CD4-positive, alpha-beta T cell (primary cell): ENCODE measurements at regions of chr1 and their contacts with region 1.

Region 1: DNA sequence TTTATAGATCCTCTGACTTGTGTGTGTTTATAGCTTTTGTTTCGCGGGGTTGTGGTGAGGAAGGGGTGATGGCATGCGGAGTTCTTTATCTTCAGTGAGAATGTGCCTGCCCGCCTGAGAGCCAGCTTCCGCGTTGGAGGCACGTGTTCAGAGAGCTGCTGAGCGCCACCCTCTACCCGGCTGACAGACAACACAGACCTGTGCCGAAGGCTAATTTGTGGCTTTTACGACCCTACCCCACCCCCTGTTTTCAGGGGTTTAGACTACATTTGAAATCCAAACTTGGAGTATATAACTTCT is 14.4 kb upstream of the CD101 start:
- DNase-seq: peak; percentile 57 to 87 (median 73)
- ATAC-seq: peak; percentile 93
- H3K4me3 ChIP-seq: peak overlapping the region; percentile 54
- H3K4me3 Mint-ChIP-seq: peak overlapping the region; percentile 78
- H3K27ac ChIP-seq: peak overlapping the region; percentile 42 to 72
- H3K27ac Mint-ChIP-seq: peak overlapping the region; percentile 91
- H3K4me1 ChIP-seq: peaks cover 49% of the 10 kb centered on the region
- H3K4me1 Mint-ChIP-seq: peaks cover 70% of the 10 kb centered on the region
- H3K27me3 ChIP-seq: no peaks in the 10 kb centered on the region
- H3K27me3 Mint-ChIP-seq: no peaks in the 10 kb centered on the region
- CTCF ChIP-seq: no peak

Region 2: DNA sequence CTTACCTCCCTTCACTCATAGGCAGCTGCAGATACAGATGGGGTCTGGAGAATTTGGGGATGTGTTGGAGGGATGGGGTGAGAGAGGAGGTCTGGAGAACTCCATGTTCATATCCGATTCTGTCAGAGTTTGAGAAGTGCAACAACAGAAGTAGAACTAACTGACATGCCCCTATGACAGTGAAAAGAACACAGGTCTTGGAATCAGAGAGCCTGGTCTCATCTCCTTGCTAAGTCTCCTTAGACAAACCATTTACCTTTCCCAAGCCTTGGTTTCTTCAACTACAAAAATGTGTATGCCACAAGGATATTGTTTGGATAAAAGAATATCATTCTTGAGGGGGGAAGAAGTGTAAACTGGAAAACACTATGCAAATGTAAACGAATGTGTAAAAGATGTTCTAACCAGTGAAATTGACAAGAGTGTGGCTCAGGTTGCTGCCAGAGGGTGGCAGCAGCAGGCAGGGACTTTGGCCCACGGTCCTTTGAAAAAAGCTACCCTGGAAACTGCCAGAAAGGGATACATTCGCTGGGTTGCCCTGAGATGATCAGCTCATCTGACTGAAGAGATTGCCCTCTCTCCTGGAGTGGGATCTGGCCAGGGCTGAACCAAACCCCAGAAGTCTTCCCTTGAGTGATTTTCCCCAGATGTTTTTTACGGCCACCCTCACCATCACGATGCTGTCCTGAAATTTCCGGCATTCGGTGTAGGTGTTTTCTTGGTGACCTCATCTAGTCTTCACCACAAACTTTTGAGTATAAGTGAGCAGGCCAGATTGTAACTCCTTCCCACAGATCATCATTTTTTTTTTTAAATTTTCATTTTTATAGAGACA is 250.0 kb before region 1 on chr1:
- CTCF ChIA-PET with region 1: interaction called, 10 read pairs
- POLR2A ChIA-PET with region 1: interaction called, 29 read pairs
- intact Hi-C with region 1: loop called in 1 of 2 experiments (anchors 1 kb)
- DNase-seq: peak; percentile 66 to 90 (median 73)
- ATAC-seq: peak; percentile 67
- H3K4me3 ChIP-seq: peak overlapping the region; percentile 28
- H3K4me3 Mint-ChIP-seq: peak overlapping the region; percentile 76
- H3K27ac ChIP-seq: peak overlapping the region; percentile 93 to 98
- H3K27ac Mint-ChIP-seq: peak overlapping the region; percentile 99
- H3K4me1 ChIP-seq: peaks cover 57% of the 10 kb centered on the region
- H3K4me1 Mint-ChIP-seq: peaks cover 45% of the 10 kb centered on the region
- H3K27me3 ChIP-seq: no peaks in the 10 kb centered on the region
- H3K27me3 Mint-ChIP-seq: no peaks in the 10 kb centered on the region
- CTCF ChIP-seq: peak; percentile 97

Region 3: DNA sequence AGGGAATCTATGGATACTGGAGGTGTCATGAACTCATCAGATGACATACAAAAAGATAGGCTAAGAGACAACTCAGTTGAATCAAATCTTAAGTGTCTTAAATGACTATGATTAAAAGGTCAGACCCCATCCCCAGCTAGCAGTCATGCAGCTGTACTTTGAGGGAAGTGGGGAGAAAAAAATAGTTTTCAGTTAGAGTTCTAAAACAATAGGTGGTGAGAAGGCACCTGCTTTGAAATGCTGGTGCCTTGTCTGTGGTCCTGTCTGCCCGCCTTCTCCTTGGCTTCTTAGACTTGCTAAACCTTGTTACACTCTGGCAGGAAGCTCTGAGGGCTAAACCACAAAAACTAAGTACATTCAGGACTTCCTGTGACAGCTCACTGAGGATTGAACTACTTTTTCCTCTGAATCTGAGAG is 217.6 kb before region 1 on chr1:
- CTCF ChIA-PET with region 1: interaction called, 8 read pairs
- POLR2A ChIA-PET with region 1: interaction called, 16 read pairs
- intact Hi-C with region 1: no loop called
- DNase-seq: peak in 13 of 14 experiments; percentile 60 to 94 (median 68)
- ATAC-seq: peak; percentile 79
- H3K4me3 ChIP-seq: no peak overlapping the region
- H3K4me3 Mint-ChIP-seq: peak overlapping the region; percentile 66
- H3K27ac ChIP-seq: peak overlapping the region; percentile 88 to 89
- H3K27ac Mint-ChIP-seq: peak overlapping the region; percentile 99
- H3K4me1 ChIP-seq: peaks cover 74% of the 10 kb centered on the region
- H3K4me1 Mint-ChIP-seq: peaks cover 97% of the 10 kb centered on the region
- H3K27me3 ChIP-seq: no peaks in the 10 kb centered on the region
- H3K27me3 Mint-ChIP-seq: no peaks in the 10 kb centered on the region
- CTCF ChIP-seq: no peak

Region 4: DNA sequence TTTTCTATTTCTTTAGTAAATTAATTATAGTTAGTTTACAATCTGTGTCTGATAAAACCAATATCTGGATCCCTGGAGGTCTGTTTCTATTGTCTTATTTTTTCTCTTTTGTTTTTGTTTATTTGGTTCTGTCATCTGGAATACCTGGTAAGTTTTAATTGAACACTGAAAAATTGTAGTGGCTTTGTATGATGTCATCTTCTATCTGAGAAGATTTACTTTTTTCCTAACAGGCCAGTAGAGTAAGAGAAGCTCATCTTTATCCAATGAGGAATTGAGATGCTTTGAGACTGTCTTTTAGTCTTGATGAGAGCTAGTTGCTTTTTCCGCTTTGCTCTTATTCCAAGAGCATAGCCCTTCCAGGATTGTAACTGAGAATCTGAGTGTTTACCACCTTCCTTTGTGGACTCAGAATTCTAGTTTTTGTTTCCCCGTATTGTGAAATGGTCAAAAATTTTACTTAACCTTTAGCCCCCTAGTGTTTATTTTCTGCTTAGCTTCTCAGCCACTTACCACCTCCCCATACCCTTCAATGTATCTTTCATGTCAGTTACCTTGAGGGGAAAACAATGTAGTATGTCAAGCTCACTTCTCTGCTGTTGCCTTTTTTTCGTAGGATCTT is 52.5 kb before region 1 on chr1:
- CTCF ChIA-PET with region 1: no interaction called
- POLR2A ChIA-PET with region 1: interaction called, 7 read pairs
- intact Hi-C with region 1: loop called in 1 of 2 experiments (anchors 5 kb)
- DNase-seq: peak in 3 of 14 experiments; percentile 51 to 59 (median 58)
- ATAC-seq: no peak
- H3K4me3 ChIP-seq: no peak overlapping the region
- H3K4me3 Mint-ChIP-seq: no peak overlapping the region
- H3K27ac ChIP-seq: no peak overlapping the region
- H3K27ac Mint-ChIP-seq: peak overlapping the region; percentile 76
- H3K4me1 ChIP-seq: peaks cover 7% of the 10 kb centered on the region
- H3K4me1 Mint-ChIP-seq: peaks cover 25% of the 10 kb centered on the region
- H3K27me3 ChIP-seq: no peaks in the 10 kb centered on the region
- H3K27me3 Mint-ChIP-seq: no peaks in the 10 kb centered on the region
- CTCF ChIP-seq: peak; percentile 33

Region 5: DNA sequence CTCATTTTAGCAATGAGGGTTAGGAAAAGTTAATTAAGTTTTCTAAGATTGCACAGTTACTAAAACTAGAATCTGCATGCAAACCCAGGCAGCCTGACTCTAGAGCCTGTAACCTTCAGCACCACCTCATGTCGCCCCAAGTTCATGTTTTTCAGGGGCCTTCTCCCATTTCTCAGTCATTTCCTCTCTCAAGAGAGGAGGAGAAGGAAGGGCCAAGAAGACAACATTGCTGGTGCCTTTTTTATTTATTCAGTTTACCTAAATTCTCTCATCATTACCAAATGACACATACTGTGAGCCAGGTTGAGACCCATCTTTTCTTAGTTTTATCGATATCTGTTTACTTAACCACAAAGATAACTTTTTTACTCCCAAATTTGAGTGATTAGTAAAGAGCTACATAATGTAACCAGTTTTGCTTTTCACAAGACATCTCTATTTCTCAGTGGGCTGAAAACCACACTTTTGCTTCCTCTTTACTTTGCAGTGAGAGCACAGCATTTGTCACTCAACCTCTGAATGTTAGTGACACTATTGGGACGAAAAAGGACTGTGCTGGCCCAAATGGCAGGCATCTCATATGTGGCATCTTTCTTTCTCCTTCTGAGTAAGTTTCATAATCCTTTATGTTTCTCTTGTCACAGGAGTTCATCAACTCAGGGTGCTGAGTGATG is 14.2 kb after region 1 on chr1 and contains the start of gene CD101:
- CTCF ChIA-PET with region 1: interaction called, 4 read pairs
- POLR2A ChIA-PET with region 1: interaction called, 30 read pairs
- intact Hi-C with region 1: loop called in 1 of 2 experiments (anchors 2 kb)
- DNase-seq: peak in 3 of 14 experiments; percentile 43 to 52 (median 44)
- ATAC-seq: peak; percentile 64
- H3K4me3 ChIP-seq: no peak within 1 kb of the TSS
- H3K4me3 Mint-ChIP-seq: peak within 1 kb of the TSS; percentile 62
- H3K27ac ChIP-seq: peak within 1 kb of the TSS in 1 of 2 donors; percentile 39
- H3K27ac Mint-ChIP-seq: peak within 1 kb of the TSS; percentile 76
- H3K4me1 ChIP-seq: peaks cover 28% of the 10 kb centered on the region
- H3K4me1 Mint-ChIP-seq: peaks cover 56% of the 10 kb centered on the region
- H3K27me3 ChIP-seq: no peaks in the 10 kb centered on the region
- H3K27me3 Mint-ChIP-seq: no peaks in the 10 kb centered on the region
- CTCF ChIP-seq: no peak
- total RNA-seq, gene CD101: 2.1 to 2.2 TPM

Region 6: DNA sequence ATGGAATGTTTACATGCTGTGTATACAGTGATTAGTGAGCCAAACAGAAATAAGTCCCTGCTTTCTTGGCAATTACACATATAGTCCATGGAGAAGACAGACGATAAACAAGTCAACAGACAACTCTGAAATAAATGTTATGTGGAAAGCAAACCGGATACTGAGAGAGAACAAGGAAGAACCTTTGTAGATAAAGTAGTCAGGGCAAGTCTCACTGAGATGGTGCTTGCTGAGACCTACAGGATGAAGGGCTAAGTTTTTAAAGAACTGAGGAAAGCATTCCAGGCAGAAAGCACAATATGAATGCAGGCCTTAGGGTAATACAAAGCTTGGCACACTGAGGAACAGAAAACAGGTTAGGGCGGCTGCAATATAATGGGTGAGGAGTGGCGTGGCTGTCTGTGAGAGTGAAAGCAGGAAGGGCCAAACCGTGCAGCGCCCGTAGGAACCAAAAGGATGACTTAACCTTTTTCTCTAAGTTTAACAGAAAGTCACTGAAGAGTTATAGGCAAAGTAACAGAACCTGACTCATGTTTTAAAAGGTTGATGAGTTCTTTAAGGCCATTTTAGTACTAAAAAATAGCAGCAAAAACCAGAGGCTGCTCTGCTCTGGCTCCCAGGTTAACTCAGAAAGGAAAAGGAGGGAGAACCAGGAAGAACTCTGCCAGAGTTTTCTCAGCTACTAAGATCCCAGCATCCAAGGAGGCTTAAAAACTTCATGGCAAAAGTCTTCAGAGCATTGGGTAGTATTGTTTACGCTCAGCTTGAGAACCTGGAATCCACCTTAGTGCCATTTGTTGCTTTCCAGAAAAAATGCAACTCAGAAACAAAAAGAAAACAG is 64.2 kb after region 1 on chr1:
- CTCF ChIA-PET with region 1: interaction called, 4 read pairs
- POLR2A ChIA-PET with region 1: interaction called, 13 read pairs
- intact Hi-C with region 1: loop called in 1 of 2 experiments (anchors 5 kb)
- DNase-seq: peak in 8 of 14 experiments; percentile 13 to 55 (median 39)
- ATAC-seq: no peak
- H3K4me3 ChIP-seq: peak overlapping the region; percentile 35
- H3K4me3 Mint-ChIP-seq: peak overlapping the region; percentile 46
- H3K27ac ChIP-seq: peak overlapping the region in 1 of 2 donors; percentile 27
- H3K27ac Mint-ChIP-seq: peak overlapping the region; percentile 93
- H3K4me1 ChIP-seq: peaks cover 33% of the 10 kb centered on the region
- H3K4me1 Mint-ChIP-seq: peaks cover 63% of the 10 kb centered on the region
- H3K27me3 ChIP-seq: no peaks in the 10 kb centered on the region
- H3K27me3 Mint-ChIP-seq: no peaks in the 10 kb centered on the region
- CTCF ChIP-seq: no peak

Region 7: GRCh38 chr1:117216718-117217117 is 229.5 kb after region 1 on chr1:
- CTCF ChIA-PET with region 1: no interaction called
- POLR2A ChIA-PET with region 1: no interaction called
- intact Hi-C with region 1: no loop called
- DNase-seq: no peak
- ATAC-seq: no peak
- H3K4me3 ChIP-seq: no peak overlapping the region
- H3K4me3 Mint-ChIP-seq: no peak overlapping the region
- H3K27ac ChIP-seq: no peak overlapping the region
- H3K27ac Mint-ChIP-seq: no peak overlapping the region
- H3K4me1 ChIP-seq: no peaks in the 10 kb centered on the region
- H3K4me1 Mint-ChIP-seq: no peaks in the 10 kb centered on the region
- H3K27me3 ChIP-seq: no peaks in the 10 kb centered on the region
- H3K27me3 Mint-ChIP-seq: peaks cover 7% of the 10 kb centered on the region
- CTCF ChIP-seq: no peak